ENCODE measurements at regions of chr6 and their contacts with region 1.

Region 1: GRCh38 chr6:41424370-41425058 is 89.1 kb downstream of the NCR2 start:
- DNase-seq: peak; percentile 92
- H3K4me3 Mint-ChIP-seq: no peak overlapping the region
- H3K27ac Mint-ChIP-seq: no peak overlapping the region
- H3K4me1 Mint-ChIP-seq: peaks cover 8% of the 10 kb centered on the region
- H3K27me3 Mint-ChIP-seq: peaks cover 11% of the 10 kb centered on the region

Region 2: GRCh38 chr6:41413250-41413649 is 11.3 kb before region 1 on chr6:
- CTCF ChIA-PET with region 1: interaction called, 11 read pairs
- intact Hi-C with region 1: no loop called
- DNase-seq: no peak
- H3K4me3 Mint-ChIP-seq: no peak overlapping the region
- H3K27ac Mint-ChIP-seq: no peak overlapping the region
- H3K4me1 Mint-ChIP-seq: peaks cover 6% of the 10 kb centered on the region
- H3K27me3 Mint-ChIP-seq: peaks cover 34% of the 10 kb centered on the region

Region 3: DNA sequence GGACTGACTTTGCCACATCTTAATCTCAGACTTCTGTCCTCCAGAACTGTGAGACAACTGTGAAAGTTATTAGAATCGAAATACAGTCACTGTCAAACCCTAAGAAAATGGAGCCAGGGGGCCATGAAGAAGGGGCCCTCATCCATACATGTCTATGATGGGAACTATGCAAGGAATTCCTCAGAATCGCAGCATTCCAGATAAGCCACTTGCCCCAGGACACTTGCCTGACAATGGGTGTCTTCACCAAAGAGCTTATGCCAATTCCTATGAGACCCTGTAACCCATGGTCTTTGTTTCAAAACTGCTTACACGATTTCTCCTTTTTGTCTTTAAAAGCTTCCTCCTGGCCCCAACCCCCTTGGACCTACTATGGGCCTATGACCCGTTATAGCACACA is 31.3 kb after region 1 on chr6:
- CTCF ChIA-PET with region 1: interaction called, 6 read pairs
- intact Hi-C with region 1: loop called (anchors 1 kb)
- DNase-seq: no peak
- H3K4me3 Mint-ChIP-seq: no peak overlapping the region
- H3K27ac Mint-ChIP-seq: no peak overlapping the region
- H3K4me1 Mint-ChIP-seq: no peaks in the 10 kb centered on the region
- H3K27me3 Mint-ChIP-seq: peaks cover 4% of the 10 kb centered on the region

Region 4: GRCh38 chr6:41545703-41546474 is 121.4 kb after region 1 on chr6 and contains the start of gene FOXP4:
- CTCF ChIA-PET with region 1: interaction called, 5 read pairs
- intact Hi-C with region 1: loop called (anchors 1 kb)
- DNase-seq: peak; percentile 89
- H3K4me3 Mint-ChIP-seq: peak within 1 kb of the TSS; percentile 83
- H3K27ac Mint-ChIP-seq: peak within 1 kb of the TSS; percentile 83
- H3K4me1 Mint-ChIP-seq: peaks cover 12% of the 10 kb centered on the region
- H3K27me3 Mint-ChIP-seq: no peaks in the 10 kb centered on the region
- total RNA-seq, gene FOXP4: 15.9 to 16.0 TPM

Region 5: DNA sequence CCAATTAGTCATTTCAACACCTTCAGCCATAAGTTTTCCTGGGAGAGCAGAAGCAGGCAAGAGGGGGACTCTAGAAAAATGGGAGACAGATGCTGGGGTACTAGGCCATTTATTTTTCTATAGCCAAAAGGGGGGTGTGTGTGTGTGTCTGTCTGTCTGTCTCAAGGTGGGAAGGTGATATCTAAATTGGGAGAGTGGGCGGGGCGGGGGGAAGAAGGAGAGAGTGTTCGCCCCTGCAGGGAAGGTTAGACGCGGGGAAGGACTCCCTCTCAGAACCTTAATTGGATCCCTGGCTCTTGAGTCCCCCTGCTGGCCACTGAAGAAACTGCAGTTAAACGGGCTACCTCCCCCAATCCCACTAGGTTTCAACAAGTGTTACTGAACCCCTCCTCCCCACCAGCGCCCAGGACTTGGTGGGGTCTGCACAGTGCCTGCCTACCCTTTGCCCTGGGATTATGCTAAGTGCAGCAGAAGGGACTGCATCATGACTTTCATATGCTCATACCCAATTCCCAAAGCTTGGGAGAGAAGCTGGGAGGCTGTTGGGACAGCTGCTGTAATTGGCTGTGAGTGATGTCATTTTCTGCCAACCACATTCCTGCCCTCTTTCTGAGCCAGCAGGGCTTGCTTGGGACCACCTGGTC is 167.5 kb after region 1 on chr6:
- CTCF ChIA-PET with region 1: interaction called, 50 read pairs
- intact Hi-C with region 1: loop called (anchors 1 kb)
- DNase-seq: peak; percentile 89
- H3K4me3 Mint-ChIP-seq: no peak overlapping the region
- H3K27ac Mint-ChIP-seq: no peak overlapping the region
- H3K4me1 Mint-ChIP-seq: no peaks in the 10 kb centered on the region
- H3K27me3 Mint-ChIP-seq: no peaks in the 10 kb centered on the region

Region 6: GRCh38 chr6:41675176-41675770 is 250.8 kb after region 1 on chr6:
- CTCF ChIA-PET with region 1: no interaction called
- intact Hi-C with region 1: no loop called
- DNase-seq: no peak
- H3K4me3 Mint-ChIP-seq: no peak overlapping the region
- H3K27ac Mint-ChIP-seq: no peak overlapping the region
- H3K4me1 Mint-ChIP-seq: no peaks in the 10 kb centered on the region
- H3K27me3 Mint-ChIP-seq: peaks cover 6% of the 10 kb centered on the region